Posterior vena cava (tissue), 2 donors: ENCODE measurements at regions of chr9 and their contacts with region 1.

Region 1: DNA sequence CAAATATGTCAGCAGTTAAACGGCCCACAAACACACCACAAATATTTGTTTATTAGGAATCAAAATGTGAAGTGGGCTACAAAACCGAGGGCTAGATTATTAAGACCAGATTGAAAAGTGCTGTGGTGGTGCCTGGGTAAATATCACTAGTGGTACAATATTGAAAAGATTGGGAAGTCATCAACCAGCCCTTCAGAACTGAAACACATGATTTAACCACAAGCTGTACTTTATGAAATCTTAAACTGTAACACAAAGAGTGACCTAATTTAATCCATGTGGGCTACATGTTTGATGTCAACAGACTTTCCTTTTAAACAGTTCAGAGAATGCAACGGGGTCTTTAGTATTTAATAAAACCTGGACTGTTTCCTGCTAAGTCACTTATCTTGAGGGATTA is 182.3 kb downstream of the SPATA31D1 start:
- DNase-seq: no peak

Region 2: DNA sequence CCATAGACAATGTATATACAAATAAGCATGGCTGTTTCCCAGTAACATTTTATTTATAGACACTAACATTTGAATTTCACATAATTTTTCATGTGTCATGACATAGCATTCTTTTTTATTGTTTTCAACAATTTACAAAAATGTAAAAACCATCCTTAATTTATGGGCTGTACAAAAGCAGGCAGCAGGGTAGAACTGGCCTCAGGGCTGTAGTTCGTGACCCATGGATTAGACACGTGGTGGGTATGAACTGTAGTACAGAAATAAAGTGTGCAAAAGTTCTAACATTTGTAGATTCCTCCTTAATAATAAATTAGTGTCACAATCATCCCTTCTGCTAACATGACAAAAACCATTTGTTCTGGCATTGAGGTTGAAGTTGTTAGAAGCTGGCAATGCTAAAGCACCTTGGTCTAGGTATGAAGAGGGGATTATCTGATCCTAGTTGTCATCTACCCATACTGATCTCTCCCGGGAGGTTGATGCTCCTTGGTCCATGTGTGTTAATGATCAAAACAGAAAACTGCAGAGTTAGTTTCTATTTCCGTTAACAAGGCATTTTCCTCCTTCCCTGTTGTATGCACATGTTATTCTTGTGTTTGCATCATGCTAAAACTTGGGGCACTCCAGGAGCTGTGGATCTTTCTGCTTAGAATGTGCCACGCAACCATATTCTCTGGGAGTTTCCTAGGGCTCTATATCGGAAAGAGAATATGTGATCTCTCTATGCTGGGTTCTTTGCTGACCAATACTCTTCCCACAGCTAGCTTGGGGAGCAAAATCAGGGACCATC is 1399.1 kb before region 1 on chr9:
- intact Hi-C with region 1: no loop called
- DNase-seq: no peak

Region 3: DNA sequence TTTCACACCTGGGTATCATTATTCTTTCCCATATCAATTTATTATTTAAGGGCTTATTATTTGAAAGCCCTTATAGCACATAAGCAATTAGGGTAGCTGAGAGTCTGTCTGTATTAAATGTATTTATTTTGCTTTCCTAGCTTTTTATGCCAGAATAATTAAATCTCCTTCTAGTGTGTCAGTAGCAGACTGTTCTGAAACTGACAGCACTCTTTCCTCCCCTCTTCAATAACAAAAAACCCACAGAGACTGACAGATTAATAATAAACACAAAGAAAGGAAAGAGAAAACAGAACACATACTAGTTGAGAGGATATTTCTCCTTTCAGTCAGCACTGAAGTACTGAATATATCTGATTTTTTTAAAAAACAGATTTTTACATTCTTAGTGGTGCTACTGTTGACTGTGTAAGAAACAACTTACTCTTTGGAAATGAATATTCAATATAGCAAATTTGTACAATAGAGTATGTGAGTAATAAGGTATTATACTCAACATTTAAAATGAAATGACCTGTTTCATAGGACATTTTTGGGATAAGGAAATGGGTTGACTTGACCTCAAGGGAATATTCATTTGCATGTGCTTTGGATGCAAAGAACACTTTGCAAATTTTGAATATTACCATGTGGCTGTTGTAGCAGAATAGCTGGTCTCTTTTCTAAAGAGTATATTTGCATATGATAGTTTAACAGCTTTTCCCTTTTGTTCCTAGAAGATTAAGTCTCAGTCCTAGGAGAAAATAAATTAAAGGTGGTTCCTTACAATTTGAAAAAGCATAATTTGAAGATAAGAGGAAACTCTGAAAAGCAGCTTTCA is 26.0 kb after region 1 on chr9:
- intact Hi-C with region 1: loop called in 1 of 2 experiments (anchors 1 kb)
- DNase-seq: no peak